ENCODE measurements at regions of chr1 and their contacts with region 1.

Region 1: GRCh38 chr1:151839457-151840405 is at the start of gene C2CD4D:
- DNase-seq: peak; percentile 96
- H3K4me3 Mint-ChIP-seq: peak within 1 kb of the TSS; percentile 91
- H3K27ac Mint-ChIP-seq: peak within 1 kb of the TSS; percentile 98
- H3K4me1 Mint-ChIP-seq: peaks cover 51% of the 10 kb centered on the region
- H3K27me3 Mint-ChIP-seq: no peaks in the 10 kb centered on the region
- CTCF ChIP-seq: no peak
- total RNA-seq, gene C2CD4D: 1.7 and 2.5 TPM in 2 replicates

Region 2: GRCh38 chr1:151539990-151540981 is 299.4 kb before region 1 on chr1 and contains the start of gene TUFT1:
- CTCF ChIA-PET with region 1: interaction called, 5 read pairs
- intact Hi-C with region 1: loop called (anchors 2 kb)
- DNase-seq: peak; percentile 98
- H3K4me3 Mint-ChIP-seq: peak within 1 kb of the TSS; percentile 86
- H3K27ac Mint-ChIP-seq: peak within 1 kb of the TSS; percentile 92
- H3K4me1 Mint-ChIP-seq: peaks cover 28% of the 10 kb centered on the region
- H3K27me3 Mint-ChIP-seq: no peaks in the 10 kb centered on the region
- CTCF ChIP-seq: no peak
- total RNA-seq, gene TUFT1: 31.4 and 34.3 TPM in 2 replicates

Region 3: GRCh38 chr1:151619489-151620093 is 220.1 kb before region 1 on chr1:
- CTCF ChIA-PET with region 1: no interaction called
- intact Hi-C with region 1: loop called (anchors 5 kb)
- DNase-seq: no peak
- H3K4me3 Mint-ChIP-seq: no peak overlapping the region
- H3K27ac Mint-ChIP-seq: peak overlapping the region; percentile 3
- H3K4me1 Mint-ChIP-seq: peaks cover 47% of the 10 kb centered on the region
- H3K27me3 Mint-ChIP-seq: no peaks in the 10 kb centered on the region
- CTCF ChIP-seq: no peak

Region 4: DNA sequence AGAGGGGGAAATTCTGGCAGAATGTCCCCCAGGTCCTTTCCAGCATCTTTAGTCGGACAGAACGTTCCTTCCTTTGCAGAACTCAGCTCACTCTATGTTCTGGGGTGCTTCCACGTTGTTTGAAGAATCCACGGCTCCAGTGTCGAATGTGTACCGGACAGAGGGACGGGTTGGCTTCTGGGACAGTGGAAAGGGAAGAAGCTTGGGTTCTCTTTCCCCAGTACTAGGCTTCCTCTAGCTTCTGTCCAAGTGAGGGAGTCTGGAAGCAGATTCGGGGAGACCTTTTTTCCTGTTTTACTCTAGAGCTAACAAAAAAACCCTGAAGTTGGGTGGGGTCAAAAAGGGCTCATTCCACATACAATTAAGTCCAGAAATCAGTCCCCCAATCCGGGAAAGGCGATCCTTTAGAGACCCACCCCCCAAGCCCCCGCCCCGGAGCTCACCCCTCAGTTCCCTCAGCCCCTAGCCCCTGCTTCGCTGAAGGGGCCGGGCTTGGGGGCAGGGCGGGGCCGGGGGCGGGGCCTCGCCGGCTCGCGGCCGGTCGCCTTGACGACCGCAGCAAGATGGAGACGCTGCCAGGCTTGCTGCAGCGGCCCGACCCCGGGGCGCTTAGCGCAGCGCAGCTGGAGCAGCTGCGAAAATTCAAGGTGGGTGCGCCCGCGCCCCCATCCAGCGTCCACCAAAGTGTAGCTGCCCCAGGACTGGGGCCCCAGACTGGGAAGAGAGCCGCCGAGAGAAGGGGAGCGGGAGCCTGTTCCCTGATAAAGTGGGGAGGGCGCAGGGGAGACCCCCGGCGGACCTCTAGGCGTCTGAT is 118.5 kb before region 1 on chr1 and contains the start of gene RIIAD1:
- CTCF ChIA-PET with region 1: no interaction called
- intact Hi-C with region 1: no loop called
- DNase-seq: no peak
- H3K4me3 Mint-ChIP-seq: peak within 1 kb of the TSS; percentile 75
- H3K27ac Mint-ChIP-seq: no peak within 1 kb of the TSS
- H3K4me1 Mint-ChIP-seq: peaks cover 34% of the 10 kb centered on the region
- H3K27me3 Mint-ChIP-seq: peaks cover 57% of the 10 kb centered on the region
- CTCF ChIP-seq: no peak
- total RNA-seq, gene RIIAD1: not detected in 2 replicates

Region 5: GRCh38 chr1:151739590-151740375 is 99.9 kb before region 1 on chr1:
- CTCF ChIA-PET with region 1: interaction called, 3 read pairs
- intact Hi-C with region 1: loop called (anchors 1 kb)
- DNase-seq: peak; percentile 75
- H3K4me3 Mint-ChIP-seq: no peak overlapping the region
- H3K27ac Mint-ChIP-seq: no peak overlapping the region
- H3K4me1 Mint-ChIP-seq: peaks cover 17% of the 10 kb centered on the region
- H3K27me3 Mint-ChIP-seq: no peaks in the 10 kb centered on the region
- CTCF ChIP-seq: no peak

Region 6: GRCh38 chr1:151756291-151756690 is 83.4 kb before region 1 on chr1:
- CTCF ChIA-PET with region 1: no interaction called
- intact Hi-C with region 1: no loop called
- DNase-seq: no peak
- H3K4me3 Mint-ChIP-seq: no peak overlapping the region
- H3K27ac Mint-ChIP-seq: no peak overlapping the region
- H3K4me1 Mint-ChIP-seq: peaks cover 8% of the 10 kb centered on the region
- H3K27me3 Mint-ChIP-seq: no peaks in the 10 kb centered on the region
- CTCF ChIP-seq: no peak

Region 7: DNA sequence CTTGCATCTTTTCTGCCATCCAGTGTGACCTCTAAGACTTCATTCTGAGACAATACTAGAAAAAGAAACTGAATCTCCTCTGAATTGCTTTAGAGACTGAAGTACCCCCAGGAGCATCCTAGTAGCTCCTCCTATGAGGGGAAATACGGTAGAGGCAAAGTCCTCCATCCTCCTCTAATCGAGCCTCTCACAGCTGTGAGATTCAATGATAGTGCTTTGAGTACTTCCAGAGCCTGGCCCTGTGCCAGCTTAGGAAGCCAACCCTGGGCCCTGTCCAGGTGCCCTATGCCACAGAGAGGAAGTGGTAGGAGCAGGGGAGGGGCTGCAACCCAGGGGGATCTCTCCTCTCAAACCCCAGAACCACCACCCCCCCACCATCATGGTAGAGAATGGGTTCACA is 18.8 kb before region 1 on chr1:
- CTCF ChIA-PET with region 1: interaction called, 12 read pairs
- intact Hi-C with region 1: no loop called
- DNase-seq: no peak
- H3K4me3 Mint-ChIP-seq: no peak overlapping the region
- H3K27ac Mint-ChIP-seq: no peak overlapping the region
- H3K4me1 Mint-ChIP-seq: peaks cover 8% of the 10 kb centered on the region
- H3K27me3 Mint-ChIP-seq: peaks cover 49% of the 10 kb centered on the region
- CTCF ChIP-seq: no peak

Region 8: GRCh38 chr1:151853411-151853943 is 13.7 kb after region 1 on chr1 and contains the start of gene THEM5:
- CTCF ChIA-PET with region 1: no interaction called
- intact Hi-C with region 1: no loop called
- DNase-seq: no peak
- H3K4me3 Mint-ChIP-seq: no peak within 1 kb of the TSS
- H3K27ac Mint-ChIP-seq: no peak within 1 kb of the TSS
- H3K4me1 Mint-ChIP-seq: no peaks in the 10 kb centered on the region
- H3K27me3 Mint-ChIP-seq: peaks cover 47% of the 10 kb centered on the region
- CTCF ChIP-seq: no peak
- total RNA-seq, gene THEM5: not detected in 2 replicates

Region 9: GRCh38 chr1:152110860-152111514 is 271.3 kb after region 1 on chr1:
- CTCF ChIA-PET with region 1: no interaction called
- intact Hi-C with region 1: no loop called
- DNase-seq: peak; percentile 48
- H3K4me3 Mint-ChIP-seq: no peak overlapping the region
- H3K27ac Mint-ChIP-seq: no peak overlapping the region
- H3K4me1 Mint-ChIP-seq: peaks cover 13% of the 10 kb centered on the region
- H3K27me3 Mint-ChIP-seq: peaks cover 18% of the 10 kb centered on the region
- CTCF ChIP-seq: no peak

Measured in Calu3 (cell line).